HEK293 (cell line): ENCODE measurements at regions of chr22 and their contacts with region 1.

Region 1: GRCh38 chr22:23156286-23156685 is 11.0 kb downstream of the RAB36 start:
- H3K4me3 ChIP-seq: no peak overlapping the region
- H3K27ac ChIP-seq: no peak overlapping the region
- H3K4me1 ChIP-seq: no peaks in the 10 kb centered on the region
- CTCF ChIP-seq: no peak

Region 2: DNA sequence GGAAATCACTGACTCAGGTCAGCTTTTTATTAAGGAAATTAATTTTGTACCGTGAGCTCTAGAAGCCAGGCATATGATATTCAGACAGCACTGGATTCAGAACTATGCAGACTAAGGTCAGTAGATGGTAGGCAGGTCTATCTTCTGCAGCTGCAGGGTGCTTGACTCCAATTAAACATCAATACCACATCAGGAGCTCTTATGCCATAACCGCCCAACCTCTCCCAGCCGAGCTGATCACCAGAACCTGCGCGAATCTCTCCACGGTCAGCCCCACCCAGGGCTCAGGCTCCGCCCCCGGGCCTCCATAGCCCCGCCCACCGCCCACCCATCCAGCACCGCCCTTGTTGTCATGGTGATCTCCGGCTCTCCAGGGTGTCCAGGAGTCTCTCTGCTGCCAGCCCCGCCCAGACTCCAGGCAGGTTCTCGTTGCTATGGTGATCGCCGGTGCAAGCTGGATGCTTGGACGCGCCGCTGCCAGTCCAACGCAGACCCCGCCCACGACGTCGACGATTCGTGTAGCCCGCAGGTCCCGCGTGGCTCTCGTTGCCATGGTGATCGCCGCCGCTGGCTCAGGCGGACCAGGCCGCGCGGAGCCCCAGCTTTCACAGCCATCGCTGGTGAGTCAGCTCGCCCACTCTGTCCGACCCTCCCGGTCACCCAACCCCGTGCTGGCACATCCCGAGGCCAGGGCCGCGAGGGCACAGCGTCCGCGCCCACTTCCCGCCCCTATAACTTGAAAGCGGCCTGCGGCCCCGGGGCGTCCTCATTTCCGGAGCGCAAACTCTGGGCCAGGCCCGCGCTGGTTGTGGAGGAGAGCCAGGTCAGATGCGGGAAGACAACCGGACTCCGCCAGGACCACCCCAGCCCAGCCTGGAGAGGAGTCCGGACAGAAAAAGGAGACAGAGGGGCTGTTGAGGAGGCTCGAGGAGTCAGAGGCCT is 11.1 kb before region 1 on chr22 and contains the start of gene RAB36:
- CTCF ChIA-PET with region 1: interaction called, 11 read pairs
- POLR2A ChIA-PET with region 1: interaction called, 10 read pairs
- H3K4me3 ChIP-seq: peak within 1 kb of the TSS; percentile 70
- H3K27ac ChIP-seq: peak within 1 kb of the TSS; percentile 19; the same call in 1 of the 2 replicates
- H3K4me1 ChIP-seq: peaks cover 5% of the 10 kb centered on the region; the same call in 1 of the 2 replicates
- CTCF ChIP-seq: no peak